AG04449 (cell line): ENCODE measurements at regions of chr11 and their contacts with region 1.

Region 1: GRCh38 chr11:117098269-117099232 is at the start of gene SIK3:
- DNase-seq: no peak
- H3K4me3 ChIP-seq: peak within 1 kb of the TSS; percentile 83
- CTCF ChIP-seq: peak; percentile 80

Region 2: DNA sequence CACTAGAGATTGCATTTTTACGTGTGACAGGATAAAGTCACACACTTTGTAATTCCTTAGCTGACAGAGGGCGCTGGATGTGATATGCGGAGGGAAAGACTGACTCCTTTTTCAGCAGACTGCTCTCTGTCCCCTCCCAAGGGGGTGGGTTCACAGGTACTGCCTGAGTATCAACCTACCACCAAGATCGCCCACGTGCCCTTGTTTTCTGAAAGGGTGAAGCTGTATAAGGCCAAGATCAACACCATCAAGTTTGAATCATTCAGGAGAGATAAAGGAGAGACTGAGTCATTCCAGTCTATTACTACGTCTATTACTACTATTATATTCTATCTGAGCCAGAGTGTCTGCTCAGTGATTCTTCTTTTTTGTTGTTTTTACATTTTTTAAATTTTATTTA is 356.4 kb before region 1 on chr11:
- CTCF ChIA-PET with region 1: interaction called, 12 read pairs
- POLR2A ChIA-PET with region 1: no interaction called
- DNase-seq: no peak
- H3K4me3 ChIP-seq: no peak overlapping the region
- CTCF ChIP-seq: no peak

Region 3: DNA sequence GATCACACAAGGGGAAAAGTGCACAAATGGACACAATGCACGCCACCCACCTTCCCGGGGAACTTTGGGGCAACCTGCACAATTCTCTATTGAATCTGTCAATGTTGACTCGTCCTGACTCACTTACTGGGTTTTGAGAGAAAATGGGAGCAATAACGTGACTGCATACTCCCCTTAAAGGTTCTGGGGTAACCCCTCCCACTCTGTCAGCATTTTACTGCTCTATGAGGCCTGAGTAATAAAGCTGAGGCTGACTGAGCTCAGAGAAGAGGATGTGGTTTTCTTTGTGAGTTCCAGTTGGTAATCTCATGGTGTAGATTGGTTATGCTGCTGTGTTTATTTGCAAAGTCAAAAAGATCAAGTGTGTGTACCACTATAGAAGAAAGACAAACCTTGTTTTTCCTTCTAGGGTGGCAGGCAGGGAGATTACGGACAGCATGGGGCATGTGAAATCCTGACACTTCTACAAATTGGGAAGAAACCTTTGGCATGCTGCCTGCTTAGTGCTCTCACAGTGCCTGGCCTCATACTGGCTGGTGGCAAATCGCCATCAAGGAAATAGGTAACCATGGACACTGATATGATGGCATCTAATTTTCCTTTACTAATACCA is 245.0 kb before region 1 on chr11:
- CTCF ChIA-PET with region 1: interaction called, 11 read pairs
- POLR2A ChIA-PET with region 1: interaction called, 5 read pairs
- DNase-seq: peak; percentile 80
- H3K4me3 ChIP-seq: no peak overlapping the region
- CTCF ChIP-seq: no peak

Region 4: GRCh38 chr11:116871248-116871647 is 227.3 kb before region 1 on chr11:
- CTCF ChIA-PET with region 1: interaction called, 11 read pairs
- POLR2A ChIA-PET with region 1: interaction called, 4 read pairs
- DNase-seq: no peak
- H3K4me3 ChIP-seq: no peak overlapping the region
- CTCF ChIP-seq: no peak

Region 5: DNA sequence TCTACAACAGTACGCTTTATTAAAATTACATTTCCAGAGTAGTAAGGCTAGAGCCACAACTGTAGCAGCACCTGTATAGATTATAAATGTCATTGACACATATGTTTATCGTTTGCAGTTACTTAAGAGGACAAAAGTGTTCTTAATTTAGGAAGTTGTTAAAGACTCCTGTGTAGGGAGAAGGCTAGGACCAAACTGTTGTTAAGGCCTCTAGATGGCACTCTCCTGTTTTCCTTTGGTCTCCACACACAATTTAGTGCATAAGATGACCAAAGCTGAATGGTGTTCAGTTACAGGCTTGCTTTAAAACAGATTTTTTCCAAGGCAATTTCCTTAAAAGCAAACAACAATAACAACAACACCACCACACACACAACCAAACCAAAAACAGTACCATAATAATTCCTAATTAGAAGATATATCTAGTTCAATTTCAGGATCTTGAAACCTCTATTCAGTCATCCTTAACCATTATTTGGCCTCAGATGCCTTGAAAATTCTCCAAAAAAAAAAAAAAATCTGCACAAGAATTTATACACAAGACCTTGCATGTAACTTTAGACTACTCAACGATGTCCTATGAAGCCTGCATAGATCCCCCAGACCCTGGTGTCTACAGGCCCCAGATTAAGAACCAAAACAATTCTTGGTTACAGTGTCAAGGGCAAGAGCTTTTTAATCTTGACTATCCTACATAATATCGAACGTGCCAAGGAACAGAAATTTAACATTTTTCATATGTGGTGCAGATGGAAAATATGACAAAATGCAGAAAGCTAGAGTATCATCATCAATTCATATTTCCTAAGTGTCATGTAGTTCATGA is 218.5 kb before region 1 on chr11:
- CTCF ChIA-PET with region 1: interaction called, 53 read pairs
- POLR2A ChIA-PET with region 1: interaction called, 3 read pairs
- DNase-seq: no peak
- H3K4me3 ChIP-seq: no peak overlapping the region
- CTCF ChIP-seq: peak; percentile 76

Region 6: GRCh38 chr11:117300283-117300663 is 201.7 kb after region 1 on chr11:
- CTCF ChIA-PET with region 1: no interaction called
- POLR2A ChIA-PET with region 1: no interaction called
- DNase-seq: no peak
- H3K4me3 ChIP-seq: no peak overlapping the region
- CTCF ChIP-seq: no peak